ENCODE measurements at regions of chr13 and their contacts with region 1.

Region 1: GRCh38 chr13:30142486-30143211 is 164.7 kb downstream of the KATNAL1 start:
- DNase-seq: peak; percentile 94
- H3K4me3 Mint-ChIP-seq: peak overlapping the region; percentile 61
- H3K27ac Mint-ChIP-seq: peak overlapping the region; percentile 98
- H3K4me1 Mint-ChIP-seq: peaks cover 36% of the 10 kb centered on the region
- H3K27me3 Mint-ChIP-seq: no peaks in the 10 kb centered on the region
- CTCF ChIP-seq: no peak

Region 2: GRCh38 chr13:29817604-29818378 is 324.9 kb before region 1 on chr13:
- CTCF ChIA-PET with region 1: no interaction called
- POLR2A ChIA-PET with region 1: no interaction called
- intact Hi-C with region 1: no loop called
- DNase-seq: no peak
- H3K4me3 Mint-ChIP-seq: no peak overlapping the region
- H3K27ac Mint-ChIP-seq: no peak overlapping the region
- H3K4me1 Mint-ChIP-seq: peaks cover 4% of the 10 kb centered on the region
- H3K27me3 Mint-ChIP-seq: no peaks in the 10 kb centered on the region
- CTCF ChIP-seq: no peak

Region 3: DNA sequence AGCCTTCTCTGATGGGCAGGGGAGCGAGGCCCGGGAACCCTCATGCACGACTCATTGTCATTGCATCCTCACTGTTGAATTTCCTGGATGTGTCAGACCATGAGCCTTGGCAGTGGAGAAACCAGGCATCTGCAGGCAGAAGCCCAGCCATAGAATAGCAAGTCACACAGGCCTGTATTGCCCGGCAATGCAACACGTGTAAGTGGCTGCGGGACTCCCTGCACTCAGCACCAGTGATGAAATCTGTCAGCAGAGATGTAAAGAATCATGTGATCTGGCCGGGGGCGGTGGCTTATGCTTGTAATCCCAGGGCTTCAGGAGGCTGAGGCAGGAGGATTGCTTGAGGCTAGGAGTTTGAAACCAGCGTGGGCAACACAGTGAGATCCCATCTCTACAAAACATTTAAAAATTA is 35.1 kb before region 1 on chr13:
- CTCF ChIA-PET with region 1: no interaction called
- POLR2A ChIA-PET with region 1: no interaction called
- intact Hi-C with region 1: no loop called
- DNase-seq: peak; percentile 13
- H3K4me3 Mint-ChIP-seq: no peak overlapping the region
- H3K27ac Mint-ChIP-seq: no peak overlapping the region
- H3K4me1 Mint-ChIP-seq: peaks cover 23% of the 10 kb centered on the region
- H3K27me3 Mint-ChIP-seq: no peaks in the 10 kb centered on the region
- CTCF ChIP-seq: no peak

Region 4: GRCh38 chr13:30125422-30126073 is 17.1 kb before region 1 on chr13:
- CTCF ChIA-PET with region 1: interaction called, 4 read pairs
- POLR2A ChIA-PET with region 1: interaction called, 16 read pairs
- intact Hi-C with region 1: no loop called
- DNase-seq: peak; percentile 95
- H3K4me3 Mint-ChIP-seq: peak overlapping the region; percentile 47
- H3K27ac Mint-ChIP-seq: peak overlapping the region; percentile 79
- H3K4me1 Mint-ChIP-seq: peaks cover 48% of the 10 kb centered on the region
- H3K27me3 Mint-ChIP-seq: no peaks in the 10 kb centered on the region
- CTCF ChIP-seq: no peak

Region 5: GRCh38 chr13:30572859-30573275 is 430.2 kb after region 1 on chr13:
- CTCF ChIA-PET with region 1: no interaction called
- POLR2A ChIA-PET with region 1: interaction called, 6 read pairs
- intact Hi-C with region 1: loop called (anchors 5 kb)
- DNase-seq: peak; percentile 54
- H3K4me3 Mint-ChIP-seq: peak overlapping the region; percentile 68
- H3K27ac Mint-ChIP-seq: peak overlapping the region; percentile 89
- H3K4me1 Mint-ChIP-seq: peaks cover 38% of the 10 kb centered on the region
- H3K27me3 Mint-ChIP-seq: no peaks in the 10 kb centered on the region
- CTCF ChIP-seq: peak; percentile 24